Activated CD8-positive, alpha-beta T cell treated with anti-CD3 and anti-CD28 coated beads for 36 hours (primary cell): ENCODE measurements at regions of chr19 and their contacts with region 1.

Region 1: DNA sequence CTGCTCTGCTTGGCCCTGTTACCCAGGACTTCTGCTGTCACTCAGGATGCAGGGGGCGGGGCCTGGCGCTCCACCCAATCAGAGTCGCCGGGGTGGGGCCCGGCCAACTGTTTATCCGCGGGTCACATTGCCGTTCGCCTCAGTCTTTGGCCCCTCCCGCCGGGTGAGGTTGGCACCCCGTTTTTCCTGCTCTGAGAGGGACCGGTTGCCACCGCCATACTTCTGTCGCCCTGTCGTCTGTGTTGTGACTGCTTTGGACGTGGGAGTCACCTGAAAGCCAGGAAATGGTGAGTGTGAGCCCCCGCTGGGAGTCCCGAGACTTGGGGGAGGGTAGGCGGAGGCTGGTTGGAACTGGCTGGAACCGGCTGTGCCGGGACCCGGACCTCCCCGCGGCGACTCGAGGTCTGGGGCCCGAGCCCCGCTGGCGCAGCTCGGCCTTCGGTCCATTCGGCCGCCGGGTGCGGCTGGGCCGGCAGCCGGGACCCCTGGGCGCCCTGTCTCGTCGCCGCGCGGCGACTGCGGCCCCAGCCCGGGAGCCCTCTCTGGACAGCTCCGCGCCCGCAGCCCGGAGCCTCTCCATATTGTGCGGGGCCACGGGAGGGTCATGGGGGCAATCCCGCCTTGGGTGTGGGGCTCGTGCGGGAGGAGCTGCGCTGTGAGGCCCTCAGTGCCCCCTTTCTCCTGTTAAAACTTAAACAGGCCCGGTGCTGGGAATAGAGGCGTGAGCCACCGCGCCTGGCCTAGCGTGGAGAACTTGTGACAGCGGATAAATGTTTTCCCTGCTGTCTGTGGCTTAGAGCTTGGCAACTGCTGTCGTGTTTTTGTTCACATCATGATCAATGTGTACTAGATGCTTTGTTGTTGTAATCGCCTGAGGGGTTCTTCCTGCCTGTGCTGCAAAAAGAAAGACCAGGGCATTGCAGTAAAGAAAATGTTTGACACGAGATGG is at the start of gene ZNF844:
- DNase-seq: peak; percentile 89
- ATAC-seq: peak; percentile 93
- H3K4me3 Mint-ChIP-seq: peak within 1 kb of the TSS; percentile 82
- H3K27ac Mint-ChIP-seq: peak within 1 kb of the TSS; percentile 89
- H3K4me1 Mint-ChIP-seq: peaks cover 9% of the 10 kb centered on the region
- H3K27me3 Mint-ChIP-seq: no peaks in the 10 kb centered on the region
- CTCF ChIP-seq: no peak
- total RNA-seq, gene ZNF844: 2.6 to 3.8 TPM

Region 2: DNA sequence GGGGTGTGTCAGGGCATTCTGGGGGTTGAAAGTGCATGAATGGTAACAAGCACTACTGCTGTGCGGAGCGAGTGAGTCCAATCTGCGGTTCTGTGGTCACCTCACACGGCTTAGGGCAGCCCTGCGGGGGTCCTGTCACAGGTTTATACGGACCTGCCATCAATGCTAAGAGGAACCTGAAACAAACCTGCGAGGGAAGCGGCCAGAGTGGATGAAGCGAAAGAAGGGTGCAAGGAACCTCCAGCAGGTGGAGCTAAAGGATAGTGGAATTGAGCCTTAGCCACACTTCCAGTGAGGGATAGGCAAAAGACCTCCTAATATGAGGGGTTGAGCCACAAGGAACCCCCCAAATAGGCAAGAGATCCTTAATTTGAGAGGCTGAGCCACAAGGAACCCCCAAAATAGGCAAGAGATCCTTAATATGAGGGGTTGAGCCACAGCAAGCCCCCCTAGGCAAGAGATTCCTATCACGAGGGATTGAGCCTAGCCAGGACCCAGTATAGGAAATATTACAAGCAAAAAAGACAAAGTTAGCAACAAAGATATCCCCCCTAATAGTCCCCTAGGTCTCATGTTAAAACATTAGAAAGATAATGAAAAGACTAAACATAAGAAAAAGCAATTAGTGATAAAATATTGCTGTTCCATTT is 183.6 kb before region 1 on chr19:
- CTCF ChIA-PET with region 1: interaction called, 23 read pairs
- POLR2A ChIA-PET with region 1: no interaction called
- intact Hi-C with region 1: no loop called
- DNase-seq: peak; percentile 76
- ATAC-seq: peak; percentile 81
- H3K4me3 Mint-ChIP-seq: no peak overlapping the region
- H3K27ac Mint-ChIP-seq: no peak overlapping the region
- H3K4me1 Mint-ChIP-seq: peaks cover 2% of the 10 kb centered on the region
- H3K27me3 Mint-ChIP-seq: peaks cover 1% of the 10 kb centered on the region
- CTCF ChIP-seq: peak; percentile 68

Region 3: DNA sequence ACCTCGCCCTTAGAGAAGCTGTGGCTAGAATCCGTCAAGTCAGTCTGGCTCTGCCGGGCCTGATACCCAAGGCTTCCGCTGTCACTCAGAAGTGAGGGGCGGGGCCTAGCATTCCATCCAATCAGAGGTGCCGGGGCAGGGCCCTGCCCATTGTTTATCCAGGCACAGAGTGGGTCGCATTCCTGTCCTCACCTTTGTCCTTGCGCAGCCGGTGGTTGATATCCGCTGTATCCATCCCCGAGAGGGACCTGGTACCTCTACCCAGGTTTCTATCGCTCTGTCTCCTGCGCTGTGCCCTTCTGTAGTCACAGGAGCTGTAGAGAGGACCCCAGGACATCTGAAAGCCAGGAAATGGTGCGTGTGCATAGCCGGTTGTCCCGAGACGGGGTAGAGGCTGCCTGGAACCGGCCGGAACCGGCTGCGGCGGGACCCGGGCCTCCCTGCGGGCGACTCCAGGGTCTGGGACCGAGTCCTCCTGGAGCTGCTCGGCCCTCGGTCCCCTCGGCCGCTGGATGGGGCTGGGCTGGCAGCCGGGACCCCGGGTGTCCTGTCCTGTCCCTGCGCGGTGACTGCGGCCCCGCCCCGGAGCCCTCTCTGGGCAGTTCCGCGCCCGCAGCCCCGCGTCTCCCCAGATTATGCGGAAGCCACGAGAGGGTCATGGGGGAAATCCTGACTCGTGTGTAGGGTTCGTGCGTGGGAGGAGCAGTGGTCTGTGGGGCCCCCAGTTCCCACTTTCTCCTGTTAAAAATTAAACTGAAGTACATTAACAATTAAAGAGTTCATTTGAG is 99.8 kb before region 1 on chr19 and contains the start of gene ZNF763:
- CTCF ChIA-PET with region 1: interaction called, 17 read pairs
- POLR2A ChIA-PET with region 1: no interaction called
- intact Hi-C with region 1: no loop called
- DNase-seq: peak; percentile 97
- ATAC-seq: peak; percentile 97
- H3K4me3 Mint-ChIP-seq: peak within 1 kb of the TSS; percentile 88
- H3K27ac Mint-ChIP-seq: peak within 1 kb of the TSS; percentile 92
- H3K4me1 Mint-ChIP-seq: peaks cover 24% of the 10 kb centered on the region
- H3K27me3 Mint-ChIP-seq: no peaks in the 10 kb centered on the region
- CTCF ChIP-seq: no peak
- total RNA-seq, gene ZNF763: 0.83 to 1.7 TPM

Region 4: DNA sequence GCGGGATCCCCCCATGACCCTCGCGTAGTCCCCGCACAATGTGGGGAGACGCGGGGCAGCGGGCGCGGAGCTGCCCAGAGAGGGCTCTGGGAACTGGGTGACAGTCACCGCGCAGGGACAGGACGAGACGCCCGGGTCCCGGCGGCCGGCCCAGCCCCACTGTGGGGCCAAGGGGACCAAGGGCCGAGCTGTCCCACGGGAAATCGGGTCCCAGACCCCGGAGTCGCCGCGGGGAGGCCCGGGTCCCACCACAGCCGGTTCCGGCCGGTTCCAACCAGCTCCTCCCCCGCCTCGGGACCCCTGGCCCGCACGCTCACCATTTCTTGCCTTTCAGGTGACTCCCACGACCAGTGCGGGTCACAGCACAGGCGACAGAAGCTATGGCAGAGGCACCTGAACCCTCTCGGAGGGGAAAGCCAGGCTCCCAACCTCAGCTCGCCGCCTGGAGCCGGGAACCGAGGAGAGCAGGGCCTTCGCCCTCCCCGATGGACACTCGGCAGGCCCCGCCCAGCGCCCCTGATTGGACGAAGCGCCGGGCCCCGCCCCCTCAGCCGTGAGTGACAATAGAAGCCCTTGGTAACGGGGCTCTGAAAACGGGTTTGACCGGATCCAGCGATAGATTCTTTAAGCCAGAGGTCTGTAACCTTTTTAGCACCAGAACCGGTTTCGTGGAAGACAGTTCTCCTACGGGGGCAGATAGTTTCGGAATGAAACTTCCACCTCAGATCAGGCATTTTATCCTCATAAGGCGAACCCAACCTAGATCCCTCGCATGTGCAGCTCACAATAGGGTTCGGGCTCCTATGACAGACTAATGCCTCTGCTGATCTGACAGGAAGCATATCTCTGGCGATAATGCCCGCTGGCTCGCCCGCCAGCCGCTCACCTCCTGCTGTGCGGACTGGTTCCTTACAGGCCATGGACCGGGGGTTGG is 29.4 kb before region 1 on chr19 and contains the start of gene ZNF433:
- CTCF ChIA-PET with region 1: interaction called, 12 read pairs
- POLR2A ChIA-PET with region 1: no interaction called
- intact Hi-C with region 1: no loop called
- DNase-seq: peak; percentile 91
- ATAC-seq: peak; percentile 98
- H3K4me3 Mint-ChIP-seq: peak within 1 kb of the TSS; percentile 80
- H3K27ac Mint-ChIP-seq: peak within 1 kb of the TSS; percentile 76
- H3K4me1 Mint-ChIP-seq: peaks cover 12% of the 10 kb centered on the region
- H3K27me3 Mint-ChIP-seq: no peaks in the 10 kb centered on the region
- CTCF ChIP-seq: no peak
- total RNA-seq, gene ZNF433: 1.5 to 2.1 TPM

Region 5: DNA sequence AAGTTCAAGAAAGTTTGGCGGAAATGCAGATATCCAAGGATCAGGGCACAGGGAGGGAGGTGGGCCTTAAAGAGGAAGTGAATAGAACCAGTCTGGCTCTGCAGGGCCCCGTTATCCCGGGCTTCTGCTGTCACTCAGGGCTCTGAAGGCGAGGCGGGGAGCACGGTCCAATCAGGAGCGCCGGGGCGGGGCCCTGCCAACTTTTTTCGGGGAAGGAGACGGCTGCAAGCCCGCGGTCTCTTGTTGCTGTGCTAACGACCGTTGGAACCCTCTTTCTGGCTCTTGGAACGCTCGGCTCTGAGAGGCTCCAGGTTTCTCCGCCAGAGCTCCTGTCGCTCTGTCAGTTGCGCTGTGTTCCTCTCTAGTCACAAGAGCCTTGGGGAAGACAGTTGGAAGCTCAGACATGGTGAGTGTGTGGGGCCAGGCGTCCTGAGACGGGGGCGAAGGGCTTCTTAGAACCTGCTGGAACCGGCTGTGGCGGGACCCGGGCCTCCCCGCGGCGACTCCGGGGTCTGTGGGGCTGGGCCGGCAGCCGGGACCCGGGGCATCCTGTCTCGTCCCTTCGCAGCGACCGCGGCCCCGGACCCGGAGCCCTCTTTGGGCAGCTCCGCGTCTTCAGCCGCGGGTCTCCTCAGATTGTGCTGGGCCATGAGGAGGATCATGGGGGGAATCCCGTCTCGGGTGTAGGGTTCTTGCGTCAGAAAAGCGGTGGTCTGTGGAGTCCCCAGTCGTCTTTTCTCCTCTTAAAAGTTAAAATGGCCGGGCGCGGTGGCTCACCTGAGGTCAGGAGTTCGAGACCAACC is 27.4 kb after region 1 on chr19:
- CTCF ChIA-PET with region 1: interaction called, 36 read pairs
- POLR2A ChIA-PET with region 1: interaction called, 3 read pairs
- intact Hi-C with region 1: no loop called
- DNase-seq: peak; percentile 90
- ATAC-seq: peak; percentile 92
- H3K4me3 Mint-ChIP-seq: peak overlapping the region; percentile 83
- H3K27ac Mint-ChIP-seq: peak overlapping the region; percentile 92
- H3K4me1 Mint-ChIP-seq: peaks cover 10% of the 10 kb centered on the region
- H3K27me3 Mint-ChIP-seq: peaks cover 6% of the 10 kb centered on the region
- CTCF ChIP-seq: no peak

Region 6: GRCh38 chr19:12126707-12127106 is 61.8 kb after region 1 on chr19:
- CTCF ChIA-PET with region 1: interaction called, 11 read pairs
- POLR2A ChIA-PET with region 1: no interaction called
- intact Hi-C with region 1: no loop called
- DNase-seq: peak; percentile 31
- ATAC-seq: no peak
- H3K4me3 Mint-ChIP-seq: no peak overlapping the region
- H3K27ac Mint-ChIP-seq: no peak overlapping the region
- H3K4me1 Mint-ChIP-seq: peaks cover 4% of the 10 kb centered on the region
- H3K27me3 Mint-ChIP-seq: no peaks in the 10 kb centered on the region
- CTCF ChIP-seq: peak; percentile 49